ENCODE measurements at regions of chr3 and their contacts with region 1.

Region 1: GRCh38 chr3:32467333-32468070 is 35.1 kb downstream of the CMTM6 start:
- DNase-seq: peak; percentile 74
- H3K4me3 Mint-ChIP-seq: no peak overlapping the region
- H3K27ac Mint-ChIP-seq: no peak overlapping the region
- H3K4me1 Mint-ChIP-seq: peaks cover 43% of the 10 kb centered on the region
- H3K27me3 Mint-ChIP-seq: no peaks in the 10 kb centered on the region

Region 2: GRCh38 chr3:32340611-32341365 is 126.7 kb before region 1 on chr3:
- CTCF ChIA-PET with region 1: no interaction called
- POLR2A ChIA-PET with region 1: no interaction called
- DNase-seq: no peak
- H3K4me3 Mint-ChIP-seq: no peak overlapping the region
- H3K27ac Mint-ChIP-seq: no peak overlapping the region
- H3K4me1 Mint-ChIP-seq: peaks cover 9% of the 10 kb centered on the region
- H3K27me3 Mint-ChIP-seq: no peaks in the 10 kb centered on the region

Region 3: GRCh38 chr3:32374788-32375595 is 92.5 kb before region 1 on chr3:
- CTCF ChIA-PET with region 1: interaction called, 97 read pairs
- POLR2A ChIA-PET with region 1: interaction called, 10 read pairs
- DNase-seq: peak; percentile 67
- H3K4me3 Mint-ChIP-seq: no peak overlapping the region
- H3K27ac Mint-ChIP-seq: no peak overlapping the region
- H3K4me1 Mint-ChIP-seq: peaks cover 19% of the 10 kb centered on the region
- H3K27me3 Mint-ChIP-seq: peaks cover 3% of the 10 kb centered on the region

Region 4: GRCh38 chr3:32401556-32402081 is 65.9 kb before region 1 on chr3:
- CTCF ChIA-PET with region 1: interaction called, 16 read pairs
- POLR2A ChIA-PET with region 1: interaction called, 10 read pairs
- DNase-seq: peak; percentile 71
- H3K4me3 Mint-ChIP-seq: peak overlapping the region; percentile 78
- H3K27ac Mint-ChIP-seq: peak overlapping the region; percentile 96
- H3K4me1 Mint-ChIP-seq: peaks cover 58% of the 10 kb centered on the region
- H3K27me3 Mint-ChIP-seq: no peaks in the 10 kb centered on the region

Region 5: GRCh38 chr3:32428092-32429068 is 39.1 kb before region 1 on chr3:
- CTCF ChIA-PET with region 1: interaction called, 16 read pairs
- POLR2A ChIA-PET with region 1: interaction called, 5 read pairs
- DNase-seq: peak; percentile 49
- H3K4me3 Mint-ChIP-seq: peak overlapping the region; percentile 60
- H3K27ac Mint-ChIP-seq: peak overlapping the region; percentile 93
- H3K4me1 Mint-ChIP-seq: peaks cover 92% of the 10 kb centered on the region
- H3K27me3 Mint-ChIP-seq: no peaks in the 10 kb centered on the region

Region 6: DNA sequence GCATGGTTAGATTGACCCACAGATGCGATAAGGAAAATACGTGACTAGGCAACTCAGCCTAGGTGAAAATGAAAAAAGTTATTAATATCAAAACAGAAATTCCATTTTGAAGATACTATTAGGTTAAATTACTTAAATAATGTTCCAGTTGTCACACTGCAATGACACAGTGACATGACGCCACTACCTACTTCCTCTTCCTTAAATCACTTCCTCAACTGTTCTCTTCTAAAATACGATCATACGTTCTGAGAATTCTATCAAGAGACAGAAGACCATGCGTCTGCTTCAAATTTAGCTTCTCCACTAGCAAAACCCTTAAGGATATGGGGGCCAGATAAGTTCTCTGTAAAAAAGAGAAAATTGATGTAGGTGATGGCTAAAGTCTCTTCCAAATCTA is 16.9 kb after region 1 on chr3:
- CTCF ChIA-PET with region 1: interaction called, 28 read pairs
- POLR2A ChIA-PET with region 1: interaction called, 3 read pairs
- DNase-seq: no peak
- H3K4me3 Mint-ChIP-seq: no peak overlapping the region
- H3K27ac Mint-ChIP-seq: no peak overlapping the region
- H3K4me1 Mint-ChIP-seq: peaks cover 14% of the 10 kb centered on the region
- H3K27me3 Mint-ChIP-seq: no peaks in the 10 kb centered on the region